BJ (cell line): ENCODE measurements at regions of chr5 and their contacts with region 1.

Region 1: DNA sequence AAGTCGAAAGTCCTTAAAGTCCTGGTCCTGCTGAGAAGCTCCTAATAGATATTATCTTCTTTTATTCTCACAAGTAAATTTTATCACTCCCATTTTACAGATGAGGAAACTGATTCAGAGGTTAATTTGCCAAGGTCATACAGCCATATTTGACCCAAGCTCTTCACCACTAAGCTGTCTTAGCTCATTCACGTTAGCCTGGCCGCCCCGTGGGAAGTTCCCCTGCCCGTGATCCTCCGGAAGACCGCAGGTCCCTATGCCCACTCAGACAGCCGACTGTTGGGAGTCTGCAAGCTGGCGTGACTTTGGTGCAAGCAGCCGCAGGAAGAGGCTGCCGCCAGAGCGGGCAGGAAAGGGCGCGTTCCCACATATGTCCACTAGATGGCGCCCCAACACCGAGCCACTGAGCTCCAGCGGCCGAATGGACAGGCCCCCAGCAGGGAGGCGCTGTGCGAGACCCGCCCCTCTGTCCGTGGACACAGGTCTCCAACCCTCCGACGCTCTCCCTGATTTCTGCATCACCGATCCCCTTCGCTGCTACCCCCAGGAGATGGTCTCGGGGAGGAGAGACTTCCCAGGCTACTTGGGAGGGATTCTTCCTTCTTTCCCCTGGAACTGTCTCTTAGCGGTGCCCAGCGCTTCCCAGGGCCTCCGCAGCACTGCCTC is 10.0 kb upstream of the ARAP3 start:
- DNase-seq: peak; percentile 15
- H3K4me3 ChIP-seq: peak overlapping the region; percentile 37
- H3K27me3 ChIP-seq: peaks cover 17% of the 10 kb centered on the region
- CTCF ChIP-seq: peak; percentile 97

Region 2: DNA sequence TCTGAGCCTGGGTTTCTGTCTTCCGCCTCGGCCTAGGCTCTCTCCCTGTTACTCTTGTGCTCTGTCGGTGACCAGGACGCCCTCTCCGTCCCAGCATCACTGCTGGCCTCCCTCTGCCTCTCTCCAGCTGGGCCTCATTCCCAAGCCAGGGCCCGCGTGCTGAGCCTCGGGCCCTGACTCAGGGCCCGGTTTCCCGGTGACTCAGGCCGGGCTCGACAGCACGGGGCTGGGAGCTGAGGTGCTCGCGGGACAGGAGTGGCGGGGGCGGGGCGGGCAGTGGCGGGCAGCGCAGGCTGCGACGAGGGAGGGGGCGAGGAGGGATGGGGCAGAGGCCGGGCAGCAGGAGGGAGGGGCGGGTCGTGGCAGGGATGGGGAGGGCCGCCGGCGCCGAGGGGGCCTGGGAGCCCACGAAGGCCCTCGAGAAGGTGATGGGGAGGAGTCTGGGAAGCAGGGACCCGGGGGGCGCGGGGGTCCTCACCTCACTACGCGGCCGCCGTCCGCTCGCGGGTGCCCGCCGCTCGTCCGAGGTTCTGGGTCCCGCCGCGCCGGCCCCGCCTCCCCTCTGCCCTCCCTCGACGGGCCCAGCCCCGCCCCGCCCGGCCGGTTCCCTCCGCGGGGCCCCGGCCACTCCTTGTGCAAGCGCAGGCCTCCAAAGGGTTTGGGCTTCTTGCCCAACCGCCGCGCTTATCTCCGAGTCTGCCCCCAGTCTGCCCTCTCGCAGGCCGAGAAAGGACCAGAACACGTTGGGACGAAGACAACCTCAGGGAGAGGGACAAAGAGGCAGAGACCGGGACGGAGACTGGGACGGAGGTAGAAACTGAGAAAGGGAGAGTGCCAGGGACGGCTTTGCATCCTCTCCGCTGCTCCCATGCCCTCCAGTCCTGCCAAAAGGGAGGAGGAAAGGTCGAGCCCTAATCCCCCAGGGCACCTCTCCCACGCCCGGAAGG is 10.0 kb before region 1 on chr5 and contains the start of gene ARAP3:
- CTCF ChIA-PET with region 1: interaction called, 46 read pairs
- POLR2A ChIA-PET with region 1: no interaction called
- DNase-seq: peak; percentile 49
- H3K4me3 ChIP-seq: peak within 1 kb of the TSS; percentile 44
- H3K27me3 ChIP-seq: no peaks in the 10 kb centered on the region
- CTCF ChIP-seq: no peak
- polyA plus RNA-seq, gene ARAP3: 4.1 and 5.6 TPM in 2 replicates

Region 3: GRCh38 chr5:141923448-141924352 is 231.7 kb after region 1 on chr5 and contains the start of gene DELE1:
- CTCF ChIA-PET with region 1: interaction called, 13 read pairs
- POLR2A ChIA-PET with region 1: no interaction called
- DNase-seq: peak; percentile 62
- H3K4me3 ChIP-seq: peak within 1 kb of the TSS; percentile 65
- H3K27me3 ChIP-seq: no peaks in the 10 kb centered on the region
- CTCF ChIP-seq: no peak
- polyA plus RNA-seq, gene DELE1: 65.4 and 110 TPM in 2 replicates

Region 4: GRCh38 chr5:141968914-141969608 is 277.1 kb after region 1 on chr5 and contains the start of gene RNF14:
- CTCF ChIA-PET with region 1: interaction called, 293 read pairs
- POLR2A ChIA-PET with region 1: no interaction called
- DNase-seq: peak; percentile 59
- H3K4me3 ChIP-seq: peak within 1 kb of the TSS; percentile 69
- H3K27me3 ChIP-seq: no peaks in the 10 kb centered on the region
- CTCF ChIP-seq: peak; percentile 83
- polyA plus RNA-seq, gene RNF14: 27.2 and 33.1 TPM in 2 replicates

Region 5: DNA sequence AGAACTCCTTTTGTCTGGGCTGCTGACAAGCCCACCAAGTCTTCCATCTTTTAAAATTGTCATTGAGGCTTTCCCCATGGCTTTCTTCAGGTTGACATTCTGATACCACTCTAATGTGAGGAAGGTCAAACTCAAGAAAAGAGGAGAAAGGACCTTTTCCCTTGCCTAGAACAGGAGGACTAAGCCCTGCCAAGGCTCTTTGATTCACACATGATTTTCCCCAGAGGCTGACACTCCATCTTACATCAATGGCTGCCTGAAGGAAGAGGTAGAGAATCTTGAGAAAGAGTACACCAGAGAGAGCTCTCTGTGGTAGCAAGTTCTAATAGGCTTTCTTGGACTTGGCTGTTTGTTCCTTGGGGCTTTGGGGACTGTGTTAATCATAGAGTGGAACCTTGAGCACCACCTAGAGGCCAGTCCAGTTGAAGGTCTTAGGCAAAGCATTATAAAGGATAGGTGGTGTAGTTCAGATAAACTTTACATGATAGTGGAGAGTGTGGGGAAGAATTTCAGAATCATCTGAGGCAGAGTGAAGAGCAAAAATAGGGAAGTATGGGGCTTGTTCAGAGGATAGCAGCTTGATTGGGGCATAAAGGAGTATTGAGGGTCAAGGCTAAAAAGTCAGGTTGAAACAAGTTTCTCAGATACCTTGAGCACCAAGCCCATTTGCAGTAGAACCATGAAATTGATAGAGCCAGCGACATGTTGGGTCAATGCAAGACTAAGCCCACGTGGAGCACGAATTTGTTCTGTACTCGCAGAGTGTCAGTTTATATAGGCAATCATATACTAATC is 453.3 kb after region 1 on chr5:
- CTCF ChIA-PET with region 1: interaction called, 10 read pairs
- POLR2A ChIA-PET with region 1: no interaction called
- DNase-seq: no peak
- H3K4me3 ChIP-seq: no peak overlapping the region
- H3K27me3 ChIP-seq: no peaks in the 10 kb centered on the region
- CTCF ChIP-seq: peak; percentile 82